Activated CD8-positive, alpha-beta T cell treated with anti-CD3 and anti-CD28 coated beads for 36 hours (primary cell): ENCODE measurements at regions of chr16 and their contacts with region 1.

Region 1: DNA sequence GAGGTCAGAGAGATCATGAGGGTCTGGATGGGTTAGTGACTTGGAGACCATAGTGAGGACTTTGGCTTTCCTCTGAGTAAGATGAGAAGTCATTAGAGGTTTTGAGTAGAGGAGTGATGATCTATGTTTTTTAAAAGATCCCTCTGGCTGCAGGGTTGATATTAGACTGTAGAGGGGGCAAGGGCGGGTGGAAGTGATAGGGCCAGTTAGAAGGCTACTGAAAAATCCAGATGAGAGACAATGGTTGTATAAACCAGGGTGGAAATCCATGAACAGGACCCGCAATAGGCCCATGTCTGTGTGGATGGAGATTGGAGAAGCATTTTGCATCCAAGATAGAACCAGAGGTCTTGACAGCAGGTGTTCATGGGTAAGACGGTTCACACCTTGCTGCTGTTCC is 9.8 kb downstream of the ITGAL start:
- DNase-seq: peak; percentile 35
- ATAC-seq: peak; percentile 76
- H3K4me3 Mint-ChIP-seq: no peak overlapping the region
- H3K27ac Mint-ChIP-seq: peak overlapping the region; percentile 75
- H3K4me1 Mint-ChIP-seq: peaks cover 48% of the 10 kb centered on the region
- H3K27me3 Mint-ChIP-seq: no peaks in the 10 kb centered on the region
- CTCF ChIP-seq: peak; percentile 32

Region 2: DNA sequence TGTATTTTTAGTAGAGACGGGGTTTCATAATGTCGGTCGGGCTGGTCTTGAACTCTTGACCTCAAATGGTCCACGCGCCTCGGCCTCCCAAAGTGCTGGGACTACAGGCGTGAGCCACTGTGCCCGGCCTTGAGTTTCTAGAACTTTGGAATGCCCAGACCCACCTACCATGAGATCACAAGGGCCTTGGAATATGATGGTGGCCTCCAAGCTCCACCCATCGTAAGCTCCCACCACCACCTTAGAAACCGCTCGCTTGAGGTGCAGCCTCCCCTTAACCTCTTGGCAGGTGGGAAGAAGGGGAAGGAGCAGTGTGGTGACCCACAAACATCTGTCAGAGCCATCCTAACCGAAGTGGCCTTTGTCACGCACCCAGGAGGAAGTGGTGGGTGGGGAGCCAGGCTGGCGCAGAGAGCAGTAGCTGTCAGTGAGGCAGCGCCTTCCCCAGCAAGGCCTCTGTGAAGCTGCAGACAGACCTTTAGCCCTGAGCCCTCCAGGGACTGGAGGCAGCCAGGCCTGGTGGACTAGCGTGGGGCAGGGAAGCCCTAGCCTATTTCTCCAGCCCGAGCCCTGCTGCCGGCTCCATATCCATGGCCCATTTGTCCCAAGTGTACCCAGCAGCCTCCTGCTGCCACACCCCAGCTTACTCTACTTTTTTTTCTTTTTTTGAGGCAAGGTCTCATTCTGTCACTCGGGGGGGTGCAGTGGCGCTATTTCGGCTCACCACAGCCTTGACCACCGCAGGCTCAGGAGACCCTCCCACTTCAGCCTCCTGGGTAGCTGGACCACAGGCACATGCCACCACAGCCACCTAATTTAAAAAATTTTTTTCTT is 23.6 kb before region 1 on chr16:
- CTCF ChIA-PET with region 1: interaction called, 3 read pairs
- POLR2A ChIA-PET with region 1: interaction called, 280 read pairs
- intact Hi-C with region 1: no loop called
- DNase-seq: peak; percentile 97
- ATAC-seq: peak; percentile 95
- H3K4me3 Mint-ChIP-seq: peak overlapping the region; percentile 62
- H3K27ac Mint-ChIP-seq: peak overlapping the region; percentile 98
- H3K4me1 Mint-ChIP-seq: peaks cover 67% of the 10 kb centered on the region
- H3K27me3 Mint-ChIP-seq: no peaks in the 10 kb centered on the region
- CTCF ChIP-seq: no peak